Activated CD4-positive, alpha-beta memory T cell treated with anti-CD3 and anti-CD28 coated beads for 36 hours (primary cell): ENCODE measurements at regions of chr2 and their contacts with region 1.

Region 1: GRCh38 chr2:111715987-111716904 is 167.7 kb downstream of the ANAPC1 start:
- DNase-seq: no peak
- H3K4me3 Mint-ChIP-seq: no peak overlapping the region
- H3K27ac Mint-ChIP-seq: no peak overlapping the region
- H3K4me1 Mint-ChIP-seq: peaks cover 3% of the 10 kb centered on the region
- H3K27me3 Mint-ChIP-seq: peaks cover 10% of the 10 kb centered on the region

Region 2: GRCh38 chr2:110818767-110819481 is 897.3 kb before region 1 on chr2:
- CTCF ChIA-PET with region 1: no interaction called
- POLR2A ChIA-PET with region 1: no interaction called
- intact Hi-C with region 1: loop called (anchors 10 kb)
- DNase-seq: no peak
- H3K4me3 Mint-ChIP-seq: no peak overlapping the region
- H3K27ac Mint-ChIP-seq: no peak overlapping the region
- H3K4me1 Mint-ChIP-seq: no peaks in the 10 kb centered on the region
- H3K27me3 Mint-ChIP-seq: peaks cover 32% of the 10 kb centered on the region